Posterior cingulate gyrus (tissue), 11 donors: ENCODE measurements at regions of chr16 and their contacts with region 1.

Region 1: GRCh38 chr16:24539850-24540601 is 660 bp downstream of the RBBP6 start:
- DNase-seq: peak in 9 of 10 donors; percentile 27 to 92 (median 39)

Region 2: DNA sequence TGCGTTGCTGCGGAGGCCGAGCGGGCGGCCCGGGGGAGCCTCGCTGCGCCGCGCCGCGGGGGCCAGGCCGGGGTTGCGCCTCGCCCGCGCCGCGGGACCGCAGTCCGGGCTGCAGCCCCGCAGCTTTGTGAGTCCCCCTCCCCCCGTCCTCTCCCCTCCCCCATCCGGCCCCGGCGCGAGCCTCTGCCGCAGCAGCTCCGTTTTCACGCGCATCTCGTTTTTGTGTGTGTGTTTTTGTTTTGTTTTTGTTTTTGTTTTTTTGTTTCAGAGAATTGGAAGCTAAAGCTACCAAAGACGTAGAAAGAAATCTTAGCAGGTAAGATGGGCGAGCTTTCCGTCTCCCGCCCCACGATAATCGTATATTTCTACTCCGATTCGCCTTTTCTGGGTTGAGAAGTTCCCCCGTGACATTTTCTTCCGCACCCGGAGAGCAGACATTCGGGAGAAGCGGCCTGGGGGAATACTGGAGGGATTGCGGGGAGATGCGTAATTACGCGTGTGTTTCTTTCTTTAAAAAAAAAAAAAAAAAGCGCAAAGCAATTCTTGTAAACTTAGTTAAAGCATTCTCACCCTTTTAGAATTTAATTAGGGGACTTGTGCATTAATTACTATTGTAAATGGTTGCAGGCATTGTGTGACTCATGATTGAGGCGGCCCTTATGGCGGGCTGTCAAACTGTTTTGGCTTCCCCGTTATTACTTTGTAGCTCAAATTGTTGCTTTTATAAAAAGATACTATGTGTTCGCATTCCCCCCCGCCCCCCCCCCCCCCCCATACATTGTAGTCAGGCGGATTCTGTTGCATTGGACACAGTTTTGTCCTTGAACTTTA is 190.2 kb after region 1 on chr16:
- intact Hi-C with region 1: loop called (anchors 5 kb)
- DNase-seq: peak in 3 of 10 donors; percentile 13 to 41 (median 19)